ENCODE measurements at regions of chr10 and their contacts with region 1.

Region 1: GRCh38 chr10:84537447-84537931 is 209.1 kb downstream of the CCSER2 start:
- DNase-seq: peak; percentile 55
- ATAC-seq: peak; percentile 70
- H3K4me3 Mint-ChIP-seq: no peak overlapping the region
- H3K27ac Mint-ChIP-seq: no peak overlapping the region
- H3K4me1 Mint-ChIP-seq: peaks cover 23% of the 10 kb centered on the region
- H3K27me3 Mint-ChIP-seq: peaks cover 17% of the 10 kb centered on the region

Region 2: DNA sequence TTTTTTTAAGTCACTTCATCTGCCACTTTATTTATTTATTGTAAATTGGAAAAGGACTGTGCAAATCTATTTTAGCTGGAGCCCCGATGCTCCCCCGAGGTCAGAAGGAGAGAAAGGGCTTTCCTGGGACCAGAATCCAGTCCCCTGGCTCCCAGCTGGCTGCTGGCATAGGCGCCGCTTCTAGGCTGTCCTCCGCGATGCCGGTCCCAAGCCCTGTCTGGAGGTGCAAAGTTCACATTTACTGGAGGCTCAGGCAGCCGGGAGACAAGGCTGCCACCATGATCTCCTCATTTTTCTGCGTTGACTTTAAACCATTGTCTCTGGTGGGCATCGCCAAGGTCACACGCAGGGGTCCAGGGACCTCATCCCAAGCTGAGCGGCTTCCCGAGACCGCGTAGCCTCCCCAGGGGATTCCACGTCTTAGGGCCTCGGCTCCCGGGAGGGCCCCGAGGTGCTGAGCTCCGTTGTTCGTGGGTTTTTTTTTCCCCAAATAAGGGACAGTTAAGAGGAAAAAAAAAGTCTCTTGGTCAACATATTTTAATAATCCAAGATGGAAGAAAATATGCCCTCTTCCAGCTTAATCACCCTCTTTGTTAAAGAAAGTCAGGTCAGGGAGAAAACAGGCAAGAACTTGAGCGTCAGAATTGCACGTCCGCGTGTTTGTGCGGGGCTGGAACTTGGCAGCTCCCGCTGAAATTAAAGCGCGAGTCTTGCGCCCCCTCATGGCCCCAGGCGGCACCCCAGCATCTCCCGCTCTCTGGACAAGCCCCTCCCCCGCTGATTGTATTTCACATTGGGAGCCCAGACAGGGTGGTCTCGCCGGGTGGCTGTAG is 280.8 kb before region 1 on chr10:
- CTCF ChIA-PET with region 1: interaction called, 231 read pairs
- POLR2A ChIA-PET with region 1: no interaction called
- intact Hi-C with region 1: no loop called
- DNase-seq: peak; percentile 80
- ATAC-seq: peak; percentile 86
- H3K4me3 Mint-ChIP-seq: no peak overlapping the region
- H3K27ac Mint-ChIP-seq: no peak overlapping the region
- H3K4me1 Mint-ChIP-seq: peaks cover 5% of the 10 kb centered on the region
- H3K27me3 Mint-ChIP-seq: peaks cover 9% of the 10 kb centered on the region

Region 3: GRCh38 chr10:84333864-84334451 is 203.5 kb before region 1 on chr10:
- CTCF ChIA-PET with region 1: interaction called, 14 read pairs
- POLR2A ChIA-PET with region 1: no interaction called
- intact Hi-C with region 1: no loop called
- DNase-seq: peak; percentile 76
- ATAC-seq: peak; percentile 83
- H3K4me3 Mint-ChIP-seq: peak overlapping the region; percentile 52
- H3K27ac Mint-ChIP-seq: peak overlapping the region; percentile 93
- H3K4me1 Mint-ChIP-seq: peaks cover 38% of the 10 kb centered on the region
- H3K27me3 Mint-ChIP-seq: no peaks in the 10 kb centered on the region

Region 4: GRCh38 chr10:84375011-84375410 is 162.5 kb before region 1 on chr10:
- CTCF ChIA-PET with region 1: interaction called, 55 read pairs
- POLR2A ChIA-PET with region 1: no interaction called
- intact Hi-C with region 1: loop called (anchors 1 kb)
- DNase-seq: peak; percentile 53
- ATAC-seq: peak; percentile 72
- H3K4me3 Mint-ChIP-seq: no peak overlapping the region
- H3K27ac Mint-ChIP-seq: no peak overlapping the region
- H3K4me1 Mint-ChIP-seq: peaks cover 41% of the 10 kb centered on the region
- H3K27me3 Mint-ChIP-seq: no peaks in the 10 kb centered on the region

Region 5: DNA sequence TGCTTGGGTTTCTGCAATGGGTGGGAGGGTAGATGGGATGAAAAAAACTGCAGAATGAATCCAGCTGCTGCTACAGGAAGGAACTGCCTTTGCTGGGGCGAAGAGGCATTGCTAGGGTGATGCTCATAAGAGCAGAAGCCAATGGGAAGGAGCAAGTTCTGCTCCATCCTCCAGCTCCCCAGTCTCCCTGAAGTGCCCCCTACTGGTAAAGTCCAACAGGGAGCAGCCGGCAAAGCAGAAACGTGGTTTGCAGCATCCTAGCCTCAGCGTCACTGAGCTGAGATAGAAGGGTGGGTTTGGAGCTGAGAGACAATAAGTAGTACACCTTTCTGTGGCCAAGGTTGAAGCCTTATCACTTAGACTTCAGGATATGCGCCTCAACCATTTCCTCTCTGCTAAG is 11.4 kb after region 1 on chr10:
- CTCF ChIA-PET with region 1: interaction called, 71 read pairs
- POLR2A ChIA-PET with region 1: no interaction called
- intact Hi-C with region 1: no loop called
- DNase-seq: peak; percentile 49
- ATAC-seq: peak; percentile 76
- H3K4me3 Mint-ChIP-seq: no peak overlapping the region
- H3K27ac Mint-ChIP-seq: no peak overlapping the region
- H3K4me1 Mint-ChIP-seq: no peaks in the 10 kb centered on the region
- H3K27me3 Mint-ChIP-seq: peaks cover 7% of the 10 kb centered on the region

Region 6: GRCh38 chr10:84924131-84924530 is 386.6 kb after region 1 on chr10:
- CTCF ChIA-PET with region 1: no interaction called
- POLR2A ChIA-PET with region 1: no interaction called
- intact Hi-C with region 1: no loop called
- DNase-seq: no peak
- ATAC-seq: no peak
- H3K4me3 Mint-ChIP-seq: no peak overlapping the region
- H3K27ac Mint-ChIP-seq: no peak overlapping the region
- H3K4me1 Mint-ChIP-seq: no peaks in the 10 kb centered on the region
- H3K27me3 Mint-ChIP-seq: peaks cover 4% of the 10 kb centered on the region

Measured in activated CD4-positive, alpha-beta T cell treated with anti-CD3 and anti-CD28 coated beads for 36 hours (primary cell).